BJ (cell line): ENCODE measurements at regions of chr5 and their contacts with region 1.

Region 1: DNA sequence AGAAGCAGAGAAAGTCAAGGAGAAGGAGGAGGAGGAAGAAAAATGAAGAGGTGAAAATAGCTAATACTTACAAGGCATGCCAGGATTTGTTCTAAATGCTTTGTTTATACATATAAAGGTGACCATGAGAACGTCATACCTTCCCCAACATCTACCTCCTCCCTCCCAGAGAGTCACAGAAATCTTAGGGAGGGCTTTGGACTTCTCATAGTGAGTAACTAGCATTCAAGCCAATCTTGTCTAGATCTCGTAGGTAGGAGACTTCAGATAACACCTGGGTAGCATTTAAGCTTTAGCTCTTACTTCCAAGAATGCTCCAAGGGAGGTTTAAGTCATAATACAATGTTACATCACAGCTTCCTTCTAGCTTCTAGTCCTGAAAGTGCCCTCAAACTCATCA is 36.5 kb upstream of the GPBP1 start:
- DNase-seq: no peak
- H3K4me3 ChIP-seq: no peak overlapping the region
- H3K27me3 ChIP-seq: no peaks in the 10 kb centered on the region
- CTCF ChIP-seq: no peak

Region 2: DNA sequence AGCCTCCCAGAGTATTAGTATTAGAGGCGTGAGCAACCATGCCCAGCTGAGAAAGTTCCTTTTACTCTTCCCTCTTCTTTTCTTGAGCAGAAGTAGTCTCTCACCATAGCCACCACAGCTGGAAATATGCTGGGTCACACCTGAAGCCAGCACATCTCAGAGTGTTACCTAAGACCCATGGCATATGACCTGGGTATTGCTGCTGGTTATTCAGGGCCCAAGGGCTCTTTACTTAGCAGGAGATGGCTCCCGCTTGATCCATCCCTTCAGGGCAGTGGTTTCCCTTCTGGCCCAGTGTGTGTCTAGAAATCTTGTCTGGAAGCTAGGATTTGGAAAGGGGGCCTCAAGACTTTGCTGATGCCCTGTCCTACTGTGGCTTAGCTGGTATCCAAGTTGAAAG is 13.3 kb after region 1 on chr5:
- CTCF ChIA-PET with region 1: interaction called, 14 read pairs
- POLR2A ChIA-PET with region 1: no interaction called
- DNase-seq: no peak
- H3K4me3 ChIP-seq: no peak overlapping the region
- H3K27me3 ChIP-seq: no peaks in the 10 kb centered on the region
- CTCF ChIP-seq: no peak

Region 3: DNA sequence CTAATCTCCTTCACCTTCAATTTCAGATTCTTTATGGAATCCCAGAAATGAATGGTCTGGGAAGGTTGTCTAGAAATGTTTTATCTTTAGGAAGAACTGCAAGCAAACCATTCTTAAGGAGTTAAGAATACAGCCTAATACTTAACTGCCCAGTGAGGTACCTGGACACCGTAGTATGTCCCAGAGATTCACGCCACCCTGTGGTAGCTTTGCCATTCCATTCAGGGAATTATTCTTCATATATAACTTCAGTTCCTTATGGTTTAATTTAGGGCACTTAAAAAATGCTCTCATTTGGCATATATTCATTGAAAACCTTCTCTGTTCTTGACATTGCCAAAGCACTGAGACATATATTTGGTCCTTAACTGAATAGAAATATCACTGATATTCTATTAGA is 295.5 kb after region 1 on chr5:
- CTCF ChIA-PET with region 1: no interaction called
- POLR2A ChIA-PET with region 1: no interaction called
- DNase-seq: no peak
- H3K4me3 ChIP-seq: no peak overlapping the region
- H3K27me3 ChIP-seq: no peaks in the 10 kb centered on the region
- CTCF ChIP-seq: no peak